HEK293T (cell line): ENCODE measurements at regions of chr2 and their contacts with region 1.

Region 1: DNA sequence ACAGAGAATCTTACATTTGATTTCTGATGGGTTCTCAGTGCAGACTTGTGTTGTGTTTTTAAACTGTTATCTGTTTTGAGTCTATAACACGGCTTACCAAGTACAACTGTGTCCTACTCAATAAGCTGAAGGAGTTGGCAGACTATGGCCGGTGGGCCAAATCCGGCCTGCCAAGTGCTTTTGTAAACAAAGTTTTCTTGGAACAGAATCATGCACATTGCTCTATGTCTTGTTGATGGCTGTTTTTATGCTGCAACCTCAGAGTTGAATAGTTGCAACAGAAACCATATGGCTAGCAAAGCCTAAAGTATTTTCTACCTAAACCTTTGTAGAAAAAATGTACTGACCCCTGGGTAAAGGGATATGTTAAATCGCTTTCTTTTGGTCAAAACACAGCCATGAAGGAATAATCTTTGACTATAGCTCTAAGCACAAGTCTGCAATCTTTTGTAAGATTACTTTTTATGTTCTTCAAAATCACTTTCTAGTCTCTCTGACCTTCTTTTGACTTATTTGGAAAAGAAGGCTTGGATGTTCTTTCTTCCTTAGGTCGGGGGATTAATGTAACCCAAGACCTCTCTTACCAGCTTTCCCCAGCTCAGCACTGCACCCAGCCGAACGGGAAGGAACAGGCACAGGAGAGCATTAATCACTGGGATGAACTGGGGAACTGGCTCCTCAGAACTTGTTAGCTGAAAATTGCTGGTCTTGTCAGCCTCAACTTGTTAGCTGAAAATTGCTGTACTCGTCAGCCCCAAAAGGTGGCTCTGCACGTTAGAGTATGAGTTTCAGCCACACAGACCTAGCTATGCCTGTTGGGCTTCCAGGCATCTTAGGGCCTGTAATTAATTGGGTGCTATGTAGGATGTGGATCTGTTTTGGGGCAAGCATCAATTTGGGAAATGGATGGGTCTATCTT is 75.4 kb downstream of the CD8B2 start:
- DNase-seq: no peak

Region 2: DNA sequence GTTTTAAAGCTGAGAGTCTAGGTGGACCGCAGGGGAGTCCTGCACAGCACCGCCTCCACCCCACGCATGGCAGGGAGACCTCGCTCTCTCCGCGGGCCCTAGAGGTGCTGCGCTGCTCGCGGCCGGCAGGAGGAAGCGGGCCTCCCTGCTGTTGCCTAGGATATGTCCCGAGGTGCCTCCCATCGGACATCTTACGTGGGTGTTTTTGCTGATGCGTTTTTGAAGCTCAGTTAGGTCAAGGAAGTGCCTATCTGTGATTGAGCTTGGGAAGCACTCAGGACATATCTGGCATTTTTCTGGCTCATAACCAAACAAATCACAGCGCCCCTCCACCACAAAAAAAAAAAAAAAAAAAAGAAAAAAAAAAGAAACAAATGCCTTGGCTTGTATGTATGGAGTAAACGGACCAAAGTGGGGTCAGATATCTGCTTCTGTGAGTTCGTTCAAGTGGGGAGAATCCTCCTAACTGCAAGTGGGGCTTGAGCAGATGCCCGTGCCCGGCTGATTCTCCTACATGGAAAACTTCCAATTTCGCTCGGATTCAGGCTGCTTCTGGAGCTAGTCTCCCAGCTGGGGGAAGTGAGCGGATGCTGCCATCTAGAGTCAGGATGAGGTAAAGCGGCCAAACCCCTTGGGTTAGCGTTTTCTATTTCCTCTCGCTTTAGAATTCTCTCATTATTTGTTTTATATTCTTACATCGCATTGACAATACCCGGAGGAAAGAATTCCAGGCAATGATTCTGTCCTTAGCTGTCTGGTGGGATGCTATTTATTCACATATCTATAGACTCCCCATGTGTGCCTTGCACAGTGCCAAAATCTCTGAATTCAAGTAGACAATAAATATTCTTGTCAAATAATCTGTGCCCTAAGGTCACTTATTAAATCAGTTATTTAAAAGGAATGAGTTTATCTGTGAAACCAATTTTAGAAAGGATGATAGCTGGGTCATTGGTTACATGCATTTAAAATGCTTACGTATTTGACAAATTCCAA is 19.9 kb after region 1 on chr2:
- CTCF ChIA-PET with region 1: interaction called, 34 read pairs
- POLR2A ChIA-PET with region 1: no interaction called
- DNase-seq: peak; percentile 80

Region 3: DNA sequence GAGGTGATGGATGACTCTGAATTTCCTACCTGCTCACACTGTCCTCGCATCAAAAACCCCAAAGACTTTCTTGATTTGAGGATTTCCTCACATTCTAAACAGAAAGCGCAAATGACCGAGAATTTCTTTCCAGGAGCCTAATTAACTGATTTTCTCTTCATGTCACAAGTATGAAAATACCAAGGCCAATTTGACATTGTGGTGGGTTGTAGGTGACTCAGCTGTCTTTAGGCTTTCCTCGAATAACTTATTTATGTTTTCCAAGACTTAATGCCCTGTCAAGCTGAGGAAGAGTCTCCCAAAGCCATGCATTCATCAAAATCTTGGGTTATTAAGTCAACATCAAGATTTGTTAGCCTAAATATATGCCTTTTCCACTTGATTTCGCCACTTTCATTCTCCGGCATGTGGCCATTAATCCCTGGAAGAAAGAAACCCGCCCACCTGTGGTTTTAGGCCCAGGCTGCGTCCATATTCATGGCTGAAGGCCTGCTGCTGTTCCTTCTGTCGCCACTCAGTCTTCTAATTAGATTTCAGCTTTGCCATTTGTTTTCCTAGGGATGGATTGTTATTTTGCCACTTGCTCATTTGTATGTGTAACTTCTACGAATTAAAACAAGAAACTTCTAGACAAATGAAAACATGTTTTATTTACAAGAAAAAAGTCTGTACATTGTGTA is 238.6 kb after region 1 on chr2:
- CTCF ChIA-PET with region 1: no interaction called
- POLR2A ChIA-PET with region 1: no interaction called
- DNase-seq: no peak